ENCODE measurements at regions of chr22 and their contacts with region 1.

Region 1: GRCh38 chr22:44735540-44736488 is 16.6 kb upstream of the ARHGAP8 start:
- DNase-seq: peak; percentile 71
- H3K4me3 ChIP-seq: no peak overlapping the region
- H3K27ac ChIP-seq: no peak overlapping the region
- H3K4me1 ChIP-seq: no peaks in the 10 kb centered on the region
- CTCF ChIP-seq: peak; percentile 88

Region 2: DNA sequence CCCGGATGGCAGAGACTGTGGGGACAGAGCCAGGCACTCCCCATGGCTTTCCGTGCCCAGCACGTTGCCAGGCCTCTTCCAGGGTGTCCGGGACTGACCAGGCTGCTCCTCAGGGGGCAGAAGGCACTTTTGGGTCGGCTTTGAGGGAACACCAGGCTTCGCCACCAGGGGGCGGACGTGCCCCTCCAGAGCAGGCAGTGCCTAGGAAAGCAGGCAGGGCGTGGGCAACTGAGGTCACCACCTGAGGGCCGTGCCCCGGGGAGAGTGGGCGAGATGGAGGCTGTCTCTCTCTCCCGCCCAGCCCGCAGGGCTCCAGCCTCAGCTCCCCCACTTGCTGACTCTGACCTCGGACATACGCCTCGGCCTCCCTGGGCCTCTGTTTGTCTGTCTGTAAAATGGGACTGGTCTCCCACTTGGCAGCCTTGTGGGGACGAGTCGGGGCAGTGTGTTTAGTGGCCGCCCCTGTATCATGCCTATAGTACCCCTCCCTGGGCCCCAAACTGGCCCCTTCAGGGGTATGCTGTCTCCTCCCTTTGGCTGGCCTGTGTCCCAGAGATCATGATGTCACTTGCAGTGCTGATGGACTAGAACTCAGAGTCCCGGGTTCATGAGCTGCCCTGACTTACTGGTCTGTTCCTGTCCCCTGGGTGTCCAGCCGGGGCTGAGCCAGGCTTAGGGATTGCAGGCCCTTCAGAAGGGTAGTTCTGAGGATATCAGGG is 38.2 kb before region 1 on chr22:
- CTCF ChIA-PET with region 1: no interaction called
- POLR2A ChIA-PET with region 1: no interaction called
- intact Hi-C with region 1: loop called (anchors 1 kb)
- DNase-seq: peak; percentile 73
- H3K4me3 ChIP-seq: no peak overlapping the region
- H3K27ac ChIP-seq: no peak overlapping the region
- H3K4me1 ChIP-seq: peaks cover 4% of the 10 kb centered on the region
- CTCF ChIP-seq: peak; percentile 85

Region 3: GRCh38 chr22:44753544-44754194 is 17.9 kb after region 1 on chr22:
- CTCF ChIA-PET with region 1: no interaction called
- POLR2A ChIA-PET with region 1: no interaction called
- intact Hi-C with region 1: no loop called
- DNase-seq: no peak
- H3K4me3 ChIP-seq: no peak overlapping the region
- H3K27ac ChIP-seq: no peak overlapping the region
- H3K4me1 ChIP-seq: no peaks in the 10 kb centered on the region
- CTCF ChIP-seq: no peak